ENCODE measurements at regions of chr1 and their contacts with region 1.

Region 1: GRCh38 chr1:114346480-114347029 is 164.4 kb downstream of the TRIM33 start:
- DNase-seq: peak; percentile 91 to 98 (median 96)
- H3K4me3 ChIP-seq: peak overlapping the region in 3 of 4 donors; percentile 11 to 58 (median 57)
- H3K27ac ChIP-seq: peak overlapping the region in 4 of 5 donors; percentile 38 to 87 (median 72)
- H3K4me1 ChIP-seq: peaks cover 4 to 8% of the 10 kb centered on the region in 2 donors
- H3K27me3 ChIP-seq: no peaks in the 10 kb centered on the region
- CTCF ChIP-seq: peak; percentile 100
- POLR2A ChIP-seq: peak in 1 of 2 donors; percentile 8

Region 2: DNA sequence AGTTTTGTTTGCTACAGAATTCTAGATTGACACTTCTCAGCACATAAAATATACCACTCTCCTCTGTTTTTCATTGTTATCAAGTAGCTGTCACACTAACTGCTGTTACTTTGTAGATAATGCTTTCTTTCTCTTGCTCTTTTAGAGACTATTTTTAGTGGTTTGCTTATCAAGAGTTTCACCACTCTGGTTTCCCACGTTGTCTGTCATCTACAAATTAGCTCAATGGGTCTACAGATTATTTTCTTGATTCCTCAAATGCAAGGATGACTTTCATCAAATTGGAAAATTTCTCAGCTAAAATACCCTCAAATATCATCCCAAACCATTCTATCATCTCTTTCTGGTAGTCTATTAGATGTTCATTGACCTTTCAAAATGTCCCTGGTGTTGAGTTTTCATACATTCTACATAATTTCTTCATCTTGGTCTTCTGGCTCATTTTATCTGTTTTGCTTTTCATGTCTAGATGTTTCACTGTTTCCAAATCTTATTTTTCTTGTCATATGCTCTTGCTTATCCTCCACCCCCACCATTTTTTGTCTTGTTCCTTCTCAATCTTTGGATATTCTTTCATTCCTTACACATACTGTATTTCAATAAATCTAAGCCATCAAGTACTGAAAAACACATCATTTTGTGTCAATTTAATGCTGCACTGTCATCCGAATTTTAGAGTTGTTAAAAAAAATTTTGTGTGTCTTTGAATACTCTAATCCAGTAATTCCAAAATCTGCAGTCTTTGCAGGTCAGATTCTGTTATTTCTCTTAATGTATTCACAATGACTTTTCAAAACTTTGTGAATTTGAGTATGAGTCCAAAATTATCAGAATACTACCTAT is 42.1 kb after region 1 on chr1:
- intact Hi-C with region 1: no loop called
- DNase-seq: no peak
- H3K4me3 ChIP-seq: no peak overlapping the region
- H3K27ac ChIP-seq: no peak overlapping the region
- H3K4me1 ChIP-seq: no peaks in the 10 kb centered on the region
- H3K27me3 ChIP-seq: no peaks in the 10 kb centered on the region
- CTCF ChIP-seq: no peak
- POLR2A ChIP-seq: no peak

Region 3: GRCh38 chr1:114511032-114511785 is 164.7 kb after region 1 on chr1 and contains the start of gene TRIM33:
- intact Hi-C with region 1: loop called in 1 of 2 experiments (anchors 5 kb)
- DNase-seq: peak; percentile 87 to 94 (median 89)
- H3K4me3 ChIP-seq: peak within 1 kb of the TSS; percentile 72 to 99 (median 90)
- H3K27ac ChIP-seq: peak within 1 kb of the TSS; percentile 89 to 99 (median 97)
- H3K4me1 ChIP-seq: peaks cover 6 to 35% of the 10 kb centered on the region in 2 donors
- H3K27me3 ChIP-seq: no peaks in the 10 kb centered on the region
- CTCF ChIP-seq: no peak
- POLR2A ChIP-seq: peak; percentile 42 to 79
- total RNA-seq, gene TRIM33: 18.2 to 49.0 (median 27.1) TPM

Region 4: DNA sequence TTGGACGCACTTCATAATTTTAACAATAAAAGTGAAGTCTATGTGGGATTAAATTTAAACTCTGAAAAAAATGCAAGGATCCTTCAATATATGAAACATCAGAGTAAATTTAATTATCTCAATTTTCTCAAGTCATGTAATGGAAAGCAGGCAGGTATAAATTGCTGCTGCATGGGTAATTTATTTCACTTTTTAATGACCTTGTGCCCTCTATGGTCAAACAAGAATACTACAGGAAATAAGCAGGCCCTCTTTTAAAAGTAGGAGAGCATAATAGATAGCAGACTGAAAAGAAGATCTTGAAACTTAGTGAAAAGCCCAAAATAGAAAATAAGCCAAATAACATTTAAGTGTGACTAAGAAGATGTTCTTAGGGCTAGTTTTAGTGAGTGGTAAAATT is 212.0 kb after region 1 on chr1:
- intact Hi-C with region 1: loop called in 1 of 2 experiments (anchors 10 kb)
- DNase-seq: no peak
- H3K4me3 ChIP-seq: no peak overlapping the region
- H3K27ac ChIP-seq: no peak overlapping the region
- H3K4me1 ChIP-seq: no peaks in the 10 kb centered on the region
- H3K27me3 ChIP-seq: no peaks in the 10 kb centered on the region
- CTCF ChIP-seq: peak in 5 of 6 experiments; percentile 29 to 52 (median 36)
- POLR2A ChIP-seq: no peak

Measured in adrenal gland (tissue), 19 donors.